ENCODE measurements at regions of chr19 and their contacts with region 1.

Region 1: DNA sequence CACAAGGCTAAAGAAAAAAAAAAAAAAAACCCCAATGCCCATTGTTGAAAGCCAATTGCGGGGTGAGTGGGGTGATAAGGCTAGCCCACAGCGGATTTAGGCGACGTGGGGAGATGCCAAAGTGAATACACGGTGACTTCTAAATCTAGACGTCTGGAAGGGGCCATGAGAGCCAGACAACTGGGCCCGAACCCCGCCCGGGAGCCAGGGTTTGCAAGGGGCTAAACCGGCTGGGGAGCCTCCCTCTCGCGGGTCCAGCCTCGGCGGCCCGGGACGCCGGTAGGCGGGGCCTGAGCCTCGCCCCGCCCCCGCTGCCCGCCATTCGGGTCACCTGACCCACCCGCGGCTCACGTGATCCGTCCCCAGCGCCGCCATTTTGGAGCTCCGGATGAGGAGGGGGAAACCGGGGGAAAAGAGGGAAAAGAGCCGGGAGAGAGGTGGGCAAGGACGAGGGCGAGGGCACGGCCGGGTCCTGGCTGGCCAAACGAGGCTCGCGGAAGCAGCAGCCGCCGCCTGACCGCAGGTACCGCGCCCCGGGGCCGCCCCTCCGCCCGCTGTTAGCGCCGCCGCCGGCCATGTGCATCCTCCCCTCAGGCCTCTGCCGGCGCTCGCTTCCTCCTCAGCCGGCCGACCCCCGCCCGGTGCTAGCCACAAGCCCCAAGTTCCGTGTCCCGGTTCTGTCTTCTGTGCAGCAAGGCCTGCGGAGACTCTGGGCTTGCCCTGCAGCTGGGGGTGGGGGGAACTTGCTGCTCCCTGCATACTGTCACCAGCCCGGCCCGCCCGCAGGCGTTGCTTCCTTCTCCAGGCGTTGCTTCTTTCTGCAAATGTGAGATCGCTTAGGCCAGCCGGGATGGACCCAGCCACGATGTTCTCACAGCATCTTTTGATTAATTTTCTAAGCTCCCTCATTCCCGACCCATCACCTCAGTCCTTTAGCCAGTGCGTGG is at the start of gene ZNF507:
- DNase-seq: peak; percentile 90
- H3K4me3 Mint-ChIP-seq: peak within 1 kb of the TSS; percentile 96
- H3K27ac Mint-ChIP-seq: peak within 1 kb of the TSS; percentile 89
- H3K4me1 Mint-ChIP-seq: peaks cover 34% of the 10 kb centered on the region
- H3K27me3 Mint-ChIP-seq: no peaks in the 10 kb centered on the region
- total RNA-seq, gene ZNF507: 21.4 to 21.5 TPM

Region 2: GRCh38 chr19:32405431-32406161 is 60.1 kb after region 1 on chr19 and contains the start of gene DPY19L3:
- CTCF ChIA-PET with region 1: no interaction called
- intact Hi-C with region 1: loop called (anchors 1 kb)
- DNase-seq: peak; percentile 93
- H3K4me3 Mint-ChIP-seq: peak within 1 kb of the TSS; percentile 88
- H3K27ac Mint-ChIP-seq: peak within 1 kb of the TSS; percentile 90
- H3K4me1 Mint-ChIP-seq: peaks cover 19% of the 10 kb centered on the region
- H3K27me3 Mint-ChIP-seq: no peaks in the 10 kb centered on the region
- total RNA-seq, gene DPY19L3: 11.1 to 11.5 TPM

Measured in activated naive CD4-positive, alpha-beta T cell treated with anti-CD3 and anti-CD28 coated beads for 36 hours (primary cell).